ENCODE measurements at regions of chrX and their contacts with region 1.

Region 1: GRCh38 chrX:100413229-100413628 is 3.2 kb upstream of the PCDH19 start:
- H3K4me3 ChIP-seq: no peak overlapping the region
- H3K27ac ChIP-seq: no peak overlapping the region
- H3K4me1 ChIP-seq: no peaks in the 10 kb centered on the region
- CTCF ChIP-seq: 0 out of 2 replicates have a peak, but pooled peaks have one; percentile 15

Region 2: GRCh38 chrX:100216083-100216482 is 197.1 kb before region 1 on chrX:
- CTCF ChIA-PET with region 1: no interaction called
- POLR2A ChIA-PET with region 1: no interaction called
- H3K4me3 ChIP-seq: no peak overlapping the region
- H3K27ac ChIP-seq: no peak overlapping the region
- H3K4me1 ChIP-seq: no peaks in the 10 kb centered on the region
- CTCF ChIP-seq: no peak

Region 3: GRCh38 chrX:100368167-100368566 is 45.1 kb before region 1 on chrX:
- CTCF ChIA-PET with region 1: interaction called, 30 read pairs
- POLR2A ChIA-PET with region 1: no interaction called
- H3K4me3 ChIP-seq: no peak overlapping the region
- H3K27ac ChIP-seq: no peak overlapping the region
- H3K4me1 ChIP-seq: no peaks in the 10 kb centered on the region
- CTCF ChIP-seq: peak; percentile 16; the same call in 1 of the 2 replicates

Region 4: DNA sequence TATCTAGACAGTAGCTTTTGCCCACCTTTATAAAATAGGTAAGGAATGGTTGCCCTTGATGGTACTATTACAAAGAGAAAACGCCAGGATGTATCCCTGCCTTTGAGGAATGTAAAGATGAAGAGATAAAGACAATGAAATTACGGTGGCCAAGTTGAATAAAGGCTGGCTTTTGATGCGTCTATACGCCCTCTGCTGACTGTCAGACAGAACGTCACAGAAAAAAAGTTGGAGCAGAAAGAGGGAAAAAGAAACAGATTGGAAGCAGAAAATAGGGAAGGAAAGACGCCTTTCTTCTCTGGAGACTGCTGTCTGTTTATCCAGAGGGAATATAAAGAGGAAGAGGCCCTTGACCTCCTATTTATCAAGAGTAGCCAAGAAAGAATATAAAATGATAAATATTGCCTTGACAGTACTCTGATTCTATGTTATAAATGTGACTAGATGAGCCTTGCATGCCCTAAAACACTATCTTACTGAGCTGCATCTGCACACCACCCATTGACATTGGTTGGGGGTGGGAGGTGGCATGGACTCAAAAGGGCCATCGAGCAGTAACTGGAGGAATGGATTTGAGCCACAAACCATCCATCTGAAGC is 33.7 kb before region 1 on chrX:
- CTCF ChIA-PET with region 1: interaction called, 10 read pairs
- POLR2A ChIA-PET with region 1: no interaction called
- H3K4me3 ChIP-seq: no peak overlapping the region
- H3K27ac ChIP-seq: no peak overlapping the region
- H3K4me1 ChIP-seq: no peaks in the 10 kb centered on the region
- CTCF ChIP-seq: peak; percentile 54

Region 5: GRCh38 chrX:100424012-100424411 is 10.8 kb after region 1 on chrX:
- CTCF ChIA-PET with region 1: interaction called, 15 read pairs
- POLR2A ChIA-PET with region 1: interaction called, 3 read pairs
- H3K4me3 ChIP-seq: no peak overlapping the region
- H3K27ac ChIP-seq: no peak overlapping the region
- H3K4me1 ChIP-seq: no peaks in the 10 kb centered on the region
- CTCF ChIP-seq: no peak

Measured in HEK293 (cell line).